CD8-positive, alpha-beta T cell (primary cell): ENCODE measurements at regions of chr1 and their contacts with region 1.

Region 1: GRCh38 chr1:23496490-23497181 is 12.7 kb upstream of the ASAP3 start:
- DNase-seq: no peak
- ATAC-seq: peak; percentile 23
- H3K4me3 ChIP-seq: no peak overlapping the region
- H3K4me3 Mint-ChIP-seq: no peak overlapping the region
- H3K27ac ChIP-seq: no peak overlapping the region
- H3K27ac Mint-ChIP-seq: no peak overlapping the region
- H3K4me1 ChIP-seq: no peaks in the 10 kb centered on the region
- H3K4me1 Mint-ChIP-seq: no peaks in the 10 kb centered on the region
- H3K27me3 ChIP-seq: no peaks in the 10 kb centered on the region
- H3K27me3 Mint-ChIP-seq: peaks cover 4% of the 10 kb centered on the region
- CTCF ChIP-seq: no peak

Region 2: DNA sequence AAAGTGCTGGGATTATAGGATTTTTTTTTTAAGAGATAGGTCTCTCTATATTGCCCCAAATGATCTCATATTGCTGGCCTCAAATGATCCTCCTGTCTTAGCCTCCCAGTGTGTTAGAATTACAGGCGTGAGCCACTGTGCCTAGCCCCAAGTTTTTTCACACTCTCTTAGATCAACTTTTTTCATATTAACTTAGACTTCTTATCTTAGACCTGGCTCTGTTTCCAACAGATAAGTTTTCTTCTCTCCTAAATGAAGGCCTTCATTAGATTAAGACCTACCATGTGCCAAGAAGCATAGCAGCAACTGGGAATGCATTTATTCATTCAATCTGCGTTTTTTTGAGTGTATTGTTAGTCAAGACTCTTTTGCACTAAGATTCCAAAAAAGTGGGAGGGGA is 259.1 kb before region 1 on chr1:
- CTCF ChIA-PET with region 1: no interaction called
- POLR2A ChIA-PET with region 1: no interaction called
- intact Hi-C with region 1: no loop called
- DNase-seq: no peak
- ATAC-seq: no peak
- H3K4me3 ChIP-seq: no peak overlapping the region
- H3K4me3 Mint-ChIP-seq: no peak overlapping the region
- H3K27ac ChIP-seq: no peak overlapping the region
- H3K27ac Mint-ChIP-seq: no peak overlapping the region
- H3K4me1 ChIP-seq: no peaks in the 10 kb centered on the region
- H3K4me1 Mint-ChIP-seq: no peaks in the 10 kb centered on the region
- H3K27me3 ChIP-seq: no peaks in the 10 kb centered on the region
- H3K27me3 Mint-ChIP-seq: peaks cover 9% of the 10 kb centered on the region
- CTCF ChIP-seq: no peak

Region 3: DNA sequence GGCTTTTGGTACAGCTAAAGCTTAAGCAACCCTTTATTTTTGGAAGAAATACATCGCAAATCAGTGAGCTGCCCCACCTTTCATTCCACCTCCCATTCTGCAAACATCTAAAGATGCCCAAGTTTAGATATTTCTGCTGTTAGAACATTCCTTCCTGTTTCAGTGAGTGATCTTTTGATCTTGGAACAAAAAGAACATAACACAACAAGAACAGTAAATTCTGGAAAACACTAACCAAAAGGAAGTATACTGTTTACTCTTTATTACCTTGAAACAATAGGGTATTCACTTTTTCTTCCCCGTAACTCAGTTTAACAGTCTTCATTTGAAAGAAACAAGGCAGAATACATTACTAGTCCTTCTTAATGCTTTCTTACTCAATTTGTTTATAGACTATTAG is 193.1 kb before region 1 on chr1:
- CTCF ChIA-PET with region 1: no interaction called
- POLR2A ChIA-PET with region 1: no interaction called
- intact Hi-C with region 1: no loop called
- DNase-seq: no peak
- ATAC-seq: no peak
- H3K4me3 ChIP-seq: no peak overlapping the region
- H3K4me3 Mint-ChIP-seq: no peak overlapping the region
- H3K27ac ChIP-seq: no peak overlapping the region
- H3K27ac Mint-ChIP-seq: peak overlapping the region; percentile 24
- H3K4me1 ChIP-seq: no peaks in the 10 kb centered on the region
- H3K4me1 Mint-ChIP-seq: no peaks in the 10 kb centered on the region
- H3K27me3 ChIP-seq: no peaks in the 10 kb centered on the region
- H3K27me3 Mint-ChIP-seq: no peaks in the 10 kb centered on the region
- CTCF ChIP-seq: no peak

Region 4: GRCh38 chr1:23507507-23507906 is 10.9 kb after region 1 on chr1:
- CTCF ChIA-PET with region 1: interaction called, 55 read pairs
- POLR2A ChIA-PET with region 1: no interaction called
- intact Hi-C with region 1: no loop called
- DNase-seq: no peak
- ATAC-seq: no peak
- H3K4me3 ChIP-seq: no peak overlapping the region
- H3K4me3 Mint-ChIP-seq: no peak overlapping the region
- H3K27ac ChIP-seq: no peak overlapping the region
- H3K27ac Mint-ChIP-seq: no peak overlapping the region
- H3K4me1 ChIP-seq: no peaks in the 10 kb centered on the region
- H3K4me1 Mint-ChIP-seq: no peaks in the 10 kb centered on the region
- H3K27me3 ChIP-seq: no peaks in the 10 kb centered on the region
- H3K27me3 Mint-ChIP-seq: no peaks in the 10 kb centered on the region
- CTCF ChIP-seq: no peak

Region 5: GRCh38 chr1:23514111-23514679 is 17.6 kb after region 1 on chr1:
- CTCF ChIA-PET with region 1: interaction called, 234 read pairs
- POLR2A ChIA-PET with region 1: no interaction called
- intact Hi-C with region 1: no loop called
- DNase-seq: no peak
- ATAC-seq: no peak
- H3K4me3 ChIP-seq: no peak overlapping the region
- H3K4me3 Mint-ChIP-seq: no peak overlapping the region
- H3K27ac ChIP-seq: no peak overlapping the region
- H3K27ac Mint-ChIP-seq: no peak overlapping the region
- H3K4me1 ChIP-seq: no peaks in the 10 kb centered on the region
- H3K4me1 Mint-ChIP-seq: no peaks in the 10 kb centered on the region
- H3K27me3 ChIP-seq: no peaks in the 10 kb centered on the region
- H3K27me3 Mint-ChIP-seq: no peaks in the 10 kb centered on the region
- CTCF ChIP-seq: no peak

Region 6: GRCh38 chr1:23530747-23531561 is 34.3 kb after region 1 on chr1 and contains the start of gene E2F2:
- CTCF ChIA-PET with region 1: interaction called, 234 read pairs
- POLR2A ChIA-PET with region 1: interaction called, 20 read pairs
- intact Hi-C with region 1: no loop called
- DNase-seq: peak; percentile 56 to 91 (median 82)
- ATAC-seq: peak; percentile 71
- H3K4me3 ChIP-seq: peak within 1 kb of the TSS; percentile 42 to 52
- H3K4me3 Mint-ChIP-seq: peak within 1 kb of the TSS; percentile 85
- H3K27ac ChIP-seq: peak within 1 kb of the TSS in 1 of 2 experiments; percentile 72
- H3K27ac Mint-ChIP-seq: peak within 1 kb of the TSS; percentile 13
- H3K4me1 ChIP-seq: peaks cover 60% of the 10 kb centered on the region
- H3K4me1 Mint-ChIP-seq: peaks cover 63% of the 10 kb centered on the region
- H3K27me3 ChIP-seq: no peaks in the 10 kb centered on the region
- H3K27me3 Mint-ChIP-seq: no peaks in the 10 kb centered on the region
- CTCF ChIP-seq: no peak
- total RNA-seq, gene E2F2: 0.19 to 0.38 TPM

Region 7: GRCh38 chr1:23643736-23644554 is 147.3 kb after region 1 on chr1:
- CTCF ChIA-PET with region 1: interaction called, 146 read pairs
- POLR2A ChIA-PET with region 1: no interaction called
- intact Hi-C with region 1: no loop called
- DNase-seq: no peak
- ATAC-seq: no peak
- H3K4me3 ChIP-seq: no peak overlapping the region
- H3K4me3 Mint-ChIP-seq: no peak overlapping the region
- H3K27ac ChIP-seq: no peak overlapping the region
- H3K27ac Mint-ChIP-seq: no peak overlapping the region
- H3K4me1 ChIP-seq: no peaks in the 10 kb centered on the region
- H3K4me1 Mint-ChIP-seq: no peaks in the 10 kb centered on the region
- H3K27me3 ChIP-seq: no peaks in the 10 kb centered on the region
- H3K27me3 Mint-ChIP-seq: no peaks in the 10 kb centered on the region
- CTCF ChIP-seq: no peak